Left cardiac atrium (tissue), 4 donors: ENCODE measurements at regions of chr1 and their contacts with region 1.

Region 1: DNA sequence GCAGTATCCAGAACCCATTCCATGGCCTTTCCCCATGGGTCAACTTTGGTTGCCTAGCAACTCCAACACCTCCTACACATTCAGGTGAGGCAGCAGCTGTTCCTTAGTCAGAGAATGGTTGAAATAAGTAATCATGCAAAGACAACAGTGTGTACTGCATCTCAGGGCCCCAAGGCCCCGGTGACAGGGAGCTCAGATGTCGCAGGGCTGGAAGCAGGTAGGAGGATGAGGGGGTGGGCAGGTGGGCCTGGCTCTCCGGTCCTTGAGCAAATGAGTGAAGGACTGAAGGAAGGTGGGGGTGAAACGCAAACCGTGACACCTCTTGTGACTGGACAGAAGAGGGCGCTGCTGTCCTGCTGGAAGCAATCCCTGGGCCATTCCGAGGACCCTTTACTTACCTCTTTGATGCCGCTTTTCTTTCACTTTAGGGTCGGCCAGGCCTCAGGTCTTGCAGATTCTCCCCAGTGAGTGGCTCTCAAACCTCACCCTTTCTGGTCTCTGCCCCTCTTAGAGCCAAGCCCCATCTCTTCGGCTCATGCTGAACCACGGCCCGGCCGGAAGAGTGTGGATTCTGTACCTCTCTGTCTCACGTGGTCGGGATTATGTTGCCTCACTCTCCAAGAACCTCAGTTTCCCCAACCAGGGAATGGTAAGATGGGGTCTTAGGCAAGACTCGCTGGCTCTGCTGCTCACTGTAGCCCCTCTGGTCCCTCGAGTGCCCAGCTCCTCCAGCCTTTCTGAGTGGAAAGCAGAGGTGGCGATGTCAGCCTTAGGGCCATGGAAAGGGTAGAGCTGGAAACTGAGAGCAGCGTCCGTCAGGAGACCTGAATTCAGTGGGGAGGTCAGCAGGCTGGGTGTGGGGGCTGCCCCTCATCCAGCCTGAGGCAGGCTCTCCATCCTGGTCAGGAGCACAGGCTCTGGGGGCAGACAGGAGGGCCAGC is 5.6 kb upstream of the KCNA10 start:
- DNase-seq: peak; percentile 28
- ATAC-seq: peak; percentile 45

Region 2: DNA sequence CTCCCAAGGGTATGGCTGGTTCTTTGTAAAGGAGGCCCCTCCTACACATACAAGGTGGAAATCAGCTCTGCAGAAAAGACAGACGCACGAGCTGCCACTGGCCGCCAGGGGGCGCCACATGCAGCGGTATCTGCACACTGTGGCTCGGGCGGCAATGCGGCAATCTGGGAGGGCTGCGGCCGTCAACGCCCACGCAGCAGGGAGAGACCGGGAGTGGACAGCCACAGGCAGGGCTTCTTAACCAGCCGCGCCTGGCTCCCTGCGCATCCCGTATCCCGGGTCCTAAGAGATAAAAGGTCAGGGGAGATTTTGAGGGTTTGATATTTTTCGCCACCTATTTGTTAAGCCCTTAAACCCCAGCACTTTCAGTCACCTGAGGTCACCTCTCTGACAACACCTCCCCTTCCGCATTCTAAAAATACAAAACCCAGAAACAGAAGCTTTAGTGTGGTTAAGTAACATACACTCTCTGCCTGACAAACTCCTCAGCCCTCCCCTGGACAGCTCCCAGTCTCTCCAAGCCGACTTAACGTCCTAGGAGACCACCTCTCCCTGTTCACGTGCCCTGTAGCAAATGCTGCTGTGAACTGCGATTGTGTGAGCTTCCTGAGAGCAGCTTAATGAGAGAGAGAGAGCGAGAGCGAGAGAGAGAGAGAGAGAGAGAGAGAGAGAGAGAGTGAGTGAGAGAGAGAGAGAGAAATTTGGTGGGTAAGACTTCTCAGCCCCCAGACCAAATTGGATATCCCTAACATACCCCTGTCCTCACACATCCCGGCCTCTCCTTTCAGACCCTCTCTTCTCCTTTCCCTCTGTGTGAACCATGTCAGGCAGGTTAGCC is 95.0 kb after region 1 on chr1:
- intact Hi-C with region 1: loop called (anchors 1 to 5 kb)
- DNase-seq: peak; percentile 92
- ATAC-seq: peak; percentile 89 to 95

Region 3: DNA sequence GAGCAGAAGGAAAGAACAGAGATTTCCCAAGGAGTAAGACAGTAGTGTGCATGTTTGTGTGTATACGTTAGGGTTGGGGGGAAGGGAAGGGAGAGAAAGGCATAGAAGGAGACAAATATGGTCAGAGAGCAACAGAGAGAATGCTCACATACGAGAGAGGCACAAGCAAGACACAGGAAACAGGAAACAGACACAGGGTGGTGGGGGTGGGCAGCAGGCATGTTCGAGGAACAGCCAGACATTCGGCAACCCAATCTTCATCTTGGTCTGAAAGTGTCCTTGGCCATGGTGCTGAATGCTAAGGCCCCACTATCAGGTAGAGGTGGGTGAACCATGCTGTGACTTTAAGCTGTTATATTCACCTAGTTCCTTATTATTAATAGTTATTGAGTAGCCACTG is 1340.2 kb after region 1 on chr1:
- intact Hi-C with region 1: no loop called
- DNase-seq: no peak
- ATAC-seq: no peak